Activated CD4-positive, alpha-beta memory T cell treated with anti-CD3 and anti-CD28 coated beads, Interleukin-2, amount 10 ng/mL, durations not matched to agents 7 days and 5 days (primary cell): ENCODE measurements at regions of chr3 and their contacts with region 1.

Region 1: DNA sequence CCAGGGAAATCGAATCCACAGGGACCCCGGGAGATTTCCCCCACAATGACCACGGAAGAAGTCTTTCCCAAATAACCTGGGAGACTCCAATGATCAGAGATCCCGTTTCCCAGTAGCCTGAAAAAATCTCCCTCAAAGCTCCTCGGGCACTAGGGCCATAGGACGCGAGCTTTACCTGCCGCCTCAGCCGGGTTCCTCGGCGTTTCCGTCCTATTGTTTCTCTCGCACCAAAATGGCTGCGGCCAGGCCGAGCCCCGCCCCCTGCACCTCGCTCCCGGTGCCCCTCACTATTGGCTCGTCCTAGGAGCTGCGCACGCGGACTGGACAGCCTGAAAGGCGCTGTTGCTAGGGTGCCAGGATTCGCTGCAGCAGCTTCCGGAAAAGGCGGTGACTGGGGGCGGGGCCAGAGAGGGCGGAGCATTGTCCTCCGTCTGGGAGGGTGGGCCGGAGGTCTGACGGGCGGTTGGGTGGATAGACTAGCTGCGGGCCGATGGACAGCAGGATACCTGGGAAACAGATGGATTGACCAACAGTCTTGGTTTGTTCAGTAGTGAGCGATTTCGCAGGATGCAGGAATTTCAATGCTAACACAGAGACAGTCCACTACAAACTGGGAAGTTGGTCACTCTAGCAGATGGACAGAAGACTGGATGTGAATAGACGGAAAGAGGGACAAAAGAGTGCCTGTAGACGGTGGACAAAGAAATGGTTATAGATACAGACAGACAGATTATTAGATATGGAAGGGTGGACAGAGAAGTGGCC is at the start of gene IP6K2:
- DNase-seq: peak; percentile 99
- H3K4me3 Mint-ChIP-seq: peak within 1 kb of the TSS; percentile 100
- H3K27ac Mint-ChIP-seq: peak within 1 kb of the TSS; percentile 96
- H3K4me1 Mint-ChIP-seq: peaks cover 44% of the 10 kb centered on the region
- H3K27me3 Mint-ChIP-seq: peaks cover 19% of the 10 kb centered on the region
- total RNA-seq, gene IP6K2: 52.7 to 57.8 TPM

Region 2: GRCh38 chr3:48628277-48629017 is 88.7 kb before region 1 on chr3:
- CTCF ChIA-PET with region 1: no interaction called
- POLR2A ChIA-PET with region 1: no interaction called
- DNase-seq: no peak
- H3K4me3 Mint-ChIP-seq: no peak overlapping the region
- H3K27ac Mint-ChIP-seq: no peak overlapping the region
- H3K4me1 Mint-ChIP-seq: peaks cover 17% of the 10 kb centered on the region
- H3K27me3 Mint-ChIP-seq: no peaks in the 10 kb centered on the region

Region 3: DNA sequence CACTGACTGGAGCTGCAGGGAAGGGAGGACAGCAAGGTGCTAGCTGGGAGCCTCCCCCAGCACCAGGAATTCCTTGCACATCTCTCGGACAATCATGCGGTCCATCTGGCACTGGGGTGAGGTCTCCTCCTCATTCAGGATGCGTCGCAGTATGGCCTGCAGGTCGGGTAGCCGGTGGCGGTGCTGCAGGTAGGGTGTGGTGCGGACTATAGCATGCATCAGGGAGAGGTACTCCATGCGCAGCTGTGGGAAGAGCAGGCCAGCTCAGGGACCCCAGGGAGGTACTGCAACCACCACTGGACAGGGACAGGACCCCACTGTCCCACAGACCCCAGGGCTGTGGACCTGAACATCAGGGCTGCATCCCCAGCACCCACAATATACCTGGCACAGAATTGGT is 42.7 kb before region 1 on chr3:
- CTCF ChIA-PET with region 1: no interaction called
- POLR2A ChIA-PET with region 1: no interaction called
- DNase-seq: no peak
- H3K4me3 Mint-ChIP-seq: no peak overlapping the region
- H3K27ac Mint-ChIP-seq: no peak overlapping the region
- H3K4me1 Mint-ChIP-seq: peaks cover 7% of the 10 kb centered on the region
- H3K27me3 Mint-ChIP-seq: no peaks in the 10 kb centered on the region

Region 4: DNA sequence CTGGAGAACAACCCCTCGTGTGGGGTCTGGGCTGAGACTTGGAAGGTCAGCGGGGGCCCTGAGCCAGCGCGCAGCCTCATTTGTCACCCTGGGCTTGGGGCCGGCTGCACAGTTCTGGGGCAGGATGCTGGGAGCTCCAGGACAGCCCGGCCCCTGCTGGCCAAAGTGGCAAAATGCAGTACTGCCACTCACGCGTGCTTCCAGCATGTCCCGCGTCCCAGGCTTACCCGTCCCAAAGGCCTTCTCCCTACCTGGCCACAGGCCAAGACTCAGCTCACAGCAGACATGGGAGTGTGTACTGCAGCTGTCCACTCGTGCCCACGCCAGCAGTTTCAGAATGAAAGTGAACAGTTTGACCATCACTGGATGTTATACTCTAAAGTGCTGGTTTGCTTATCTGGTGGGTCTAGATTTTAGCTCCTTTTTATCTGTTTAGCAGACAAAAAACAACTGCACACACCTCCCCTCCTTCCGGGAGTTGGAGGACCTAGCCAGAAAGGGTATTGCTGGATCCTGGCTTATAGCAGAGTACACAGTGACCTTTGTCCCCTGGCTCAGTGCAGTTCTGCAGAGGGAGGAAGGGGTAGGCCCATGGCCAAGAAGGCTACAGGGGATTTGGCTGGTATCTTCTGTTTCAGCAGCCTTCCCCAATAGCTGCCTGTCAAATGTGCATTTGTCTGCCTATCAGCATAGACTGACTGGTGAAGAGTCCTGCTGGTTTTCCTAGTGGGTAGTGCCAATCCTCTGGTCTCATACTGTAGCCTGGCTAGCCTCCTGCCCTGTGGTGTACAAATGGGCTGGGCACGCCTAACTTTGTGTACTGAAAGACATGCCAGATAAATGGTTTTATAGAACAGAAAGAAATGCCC is 23.0 kb after region 1 on chr3:
- CTCF ChIA-PET with region 1: interaction called, 11 read pairs
- POLR2A ChIA-PET with region 1: interaction called, 11 read pairs
- DNase-seq: peak; percentile 57
- H3K4me3 Mint-ChIP-seq: no peak overlapping the region
- H3K27ac Mint-ChIP-seq: no peak overlapping the region
- H3K4me1 Mint-ChIP-seq: no peaks in the 10 kb centered on the region
- H3K27me3 Mint-ChIP-seq: no peaks in the 10 kb centered on the region